Mucosa of descending colon (tissue), 3 donors: ENCODE measurements at regions of chr1 and their contacts with region 1.

Region 1: GRCh38 chr1:193183019-193183627 is 3.3 kb downstream of the B3GALT2 start:
- DNase-seq: peak in 1 of 3 donors; percentile 33
- ATAC-seq: peak; percentile 77
- H3K4me3 ChIP-seq: no peak overlapping the region
- H3K4me1 ChIP-seq: peaks cover 31% of the 10 kb centered on the region
- CTCF ChIP-seq: peak; percentile 57

Region 2: GRCh38 chr1:193251950-193252349 is 68.8 kb after region 1 on chr1:
- intact Hi-C with region 1: no loop called
- DNase-seq: no peak
- ATAC-seq: no peak
- H3K4me3 ChIP-seq: no peak overlapping the region
- H3K4me1 ChIP-seq: no peaks in the 10 kb centered on the region
- CTCF ChIP-seq: no peak

Region 3: DNA sequence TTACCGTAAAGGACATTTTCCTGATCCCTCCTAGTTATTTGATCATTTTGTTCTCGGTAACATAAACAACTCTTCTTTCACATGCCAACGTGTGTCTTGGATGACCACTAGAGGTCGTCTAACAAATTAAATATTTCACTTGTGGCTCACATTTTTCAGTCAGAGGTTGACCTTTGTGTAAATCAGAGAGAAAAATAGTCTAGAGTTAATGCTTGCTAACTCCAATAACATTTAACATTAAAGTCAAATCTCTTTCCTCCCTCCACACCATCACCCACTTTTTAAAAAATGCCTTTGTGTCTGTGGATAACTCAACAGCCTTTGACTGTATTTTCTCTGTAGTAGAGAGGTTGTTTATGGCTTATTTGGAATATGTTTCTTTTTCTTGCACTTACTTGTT is 223.8 kb after region 1 on chr1:
- intact Hi-C with region 1: loop called in 1 of 2 experiments (anchors 10 kb)
- DNase-seq: peak in 1 of 3 donors; percentile 35
- ATAC-seq: peak; percentile 70
- H3K4me3 ChIP-seq: no peak overlapping the region
- H3K4me1 ChIP-seq: peaks cover 3% of the 10 kb centered on the region
- CTCF ChIP-seq: no peak

Region 4: GRCh38 chr1:194295685-194296084 is 1112.6 kb after region 1 on chr1:
- intact Hi-C with region 1: loop called in 1 of 2 experiments (anchors 10 kb)
- DNase-seq: peak in 1 of 3 donors; percentile 58
- ATAC-seq: peak; percentile 95
- H3K4me3 ChIP-seq: no peak overlapping the region
- H3K4me1 ChIP-seq: no peaks in the 10 kb centered on the region
- CTCF ChIP-seq: peak; percentile 35